ENCODE measurements at regions of chr15 and their contacts with region 1.

Region 1: GRCh38 chr15:31372635-31373091 is 46.0 kb downstream of the KLF13 start:
- DNase-seq: peak; percentile 77 to 90 (median 83)
- ATAC-seq: peak; percentile 76 to 89 (median 83)
- H3K4me3 ChIP-seq: no peak overlapping the region
- H3K27ac ChIP-seq: peak overlapping the region in 11 of 12 donors; percentile 28 to 94 (median 61)
- H3K4me1 ChIP-seq: peaks cover 0 to 96% (median 76%) of the 10 kb centered on the region in 12 donors
- H3K27me3 ChIP-seq: no peaks in the 10 kb centered on the region
- CTCF ChIP-seq: no peak
- POLR2A ChIP-seq: no peak

Region 2: GRCh38 chr15:31391687-31392671 is 19.3 kb after region 1 on chr15:
- intact Hi-C with region 1: loop called in 2 of 10 experiments (anchors 2 kb)
- DNase-seq: peak; percentile 81 to 93 (median 90)
- ATAC-seq: peak; percentile 48 to 85 (median 80)
- H3K4me3 ChIP-seq: peak overlapping the region; percentile 57 to 88 (median 75)
- H3K27ac ChIP-seq: peak overlapping the region; percentile 92 to 99 (median 96)
- H3K4me1 ChIP-seq: peaks cover 0 to 33% (median 20%) of the 10 kb centered on the region in 12 donors
- H3K27me3 ChIP-seq: no peaks in the 10 kb centered on the region
- CTCF ChIP-seq: peak in 2 of 12 donors; percentile 9 to 13
- POLR2A ChIP-seq: peak; percentile 32 to 91

Region 3: DNA sequence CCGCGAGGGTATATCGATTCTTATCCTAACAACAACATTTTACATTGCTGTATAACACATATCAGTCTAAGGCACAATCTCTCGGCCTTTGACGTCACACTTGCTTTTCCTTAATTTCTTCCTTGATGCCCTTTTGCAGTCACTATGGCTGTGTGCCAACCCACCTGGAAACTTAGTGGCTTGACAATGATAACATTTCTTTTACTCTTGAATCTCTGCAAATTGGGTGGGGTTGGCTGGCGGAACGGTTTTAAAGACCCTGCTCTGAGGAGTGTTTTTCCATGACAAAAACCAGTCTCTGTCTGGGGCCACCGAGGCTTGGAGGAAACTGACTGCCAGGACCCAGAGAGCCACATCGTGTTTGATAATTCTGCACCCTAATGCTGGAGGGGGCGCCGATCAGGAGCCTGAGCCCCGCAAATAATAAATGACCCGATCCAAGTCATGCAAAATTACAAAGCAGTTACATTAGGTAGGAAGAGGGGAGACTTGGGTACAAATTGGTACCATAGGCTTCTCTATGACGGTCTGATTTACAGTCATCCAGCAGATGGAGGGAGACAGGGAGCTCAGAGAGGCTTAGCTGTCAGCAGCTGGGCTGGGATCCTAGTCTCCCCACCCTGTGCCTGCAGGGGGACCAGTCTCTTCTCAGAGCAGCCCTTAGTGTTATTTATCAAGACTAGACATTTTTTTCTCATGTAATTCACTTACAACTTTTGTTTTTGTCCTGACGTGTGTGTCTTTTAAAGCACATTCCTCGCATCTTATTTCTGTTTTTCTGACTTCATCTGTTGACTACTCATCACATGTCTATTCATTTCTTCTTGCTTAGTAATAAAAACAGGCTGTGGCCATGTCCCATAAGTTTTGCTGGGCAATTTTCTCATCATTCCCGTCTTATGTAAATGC is 69.8 kb after region 1 on chr15:
- intact Hi-C with region 1: loop called in 6 of 10 experiments (anchors 5 to 10 kb)
- DNase-seq: no peak
- ATAC-seq: peak; percentile 41 to 80 (median 55)
- H3K4me3 ChIP-seq: no peak overlapping the region
- H3K27ac ChIP-seq: peak overlapping the region in 8 of 12 donors; percentile 18 to 86 (median 52)
- H3K4me1 ChIP-seq: peaks cover 0 to 42% (median 11%) of the 10 kb centered on the region in 12 donors
- H3K27me3 ChIP-seq: no peaks in the 10 kb centered on the region
- CTCF ChIP-seq: peak in 3 of 12 donors; percentile 17 to 37 (median 27)
- POLR2A ChIP-seq: no peak

Region 4: GRCh38 chr15:31457631-31458526 is 85.2 kb after region 1 on chr15:
- intact Hi-C with region 1: no loop called
- DNase-seq: peak in 1 of 5 donors; percentile 25
- ATAC-seq: peak; percentile 37 to 85 (median 73)
- H3K4me3 ChIP-seq: no peak overlapping the region
- H3K27ac ChIP-seq: peak overlapping the region in 2 of 12 donors; percentile 18 to 19
- H3K4me1 ChIP-seq: peaks cover 0 to 16% (median 4%) of the 10 kb centered on the region in 12 donors
- H3K27me3 ChIP-seq: no peaks in the 10 kb centered on the region
- CTCF ChIP-seq: no peak
- POLR2A ChIP-seq: no peak